ENCODE measurements at regions of chr1 and their contacts with region 1.

Region 1: DNA sequence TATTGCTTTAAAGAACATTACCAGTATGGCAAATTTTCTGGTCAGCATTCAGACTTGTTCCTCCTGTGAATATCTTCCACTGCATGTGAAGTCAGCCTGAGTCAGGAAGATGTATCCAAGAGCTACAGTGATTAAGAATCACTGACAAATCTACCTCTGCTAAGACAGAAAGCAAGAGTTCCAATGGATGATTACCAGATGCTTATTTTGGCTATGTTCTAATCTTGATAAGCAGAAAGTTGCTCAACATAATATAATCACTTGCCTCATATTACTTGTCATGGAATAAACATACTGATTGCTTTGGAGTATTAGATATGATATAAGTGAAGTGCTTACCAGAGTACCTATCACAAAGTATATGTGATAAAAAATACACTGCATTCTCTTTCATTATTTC is 738.1 kb downstream of the ADGRL2 start:
- DNase-seq: no peak
- H3K4me3 ChIP-seq: no peak overlapping the region
- H3K27ac ChIP-seq: no peak overlapping the region
- H3K4me1 ChIP-seq: no peaks in the 10 kb centered on the region
- H3K27me3 ChIP-seq: no peaks in the 10 kb centered on the region
- CTCF ChIP-seq: no peak
- EP300 ChIP-seq: no peak
- POLR2A ChIP-seq: no peak

Region 2: DNA sequence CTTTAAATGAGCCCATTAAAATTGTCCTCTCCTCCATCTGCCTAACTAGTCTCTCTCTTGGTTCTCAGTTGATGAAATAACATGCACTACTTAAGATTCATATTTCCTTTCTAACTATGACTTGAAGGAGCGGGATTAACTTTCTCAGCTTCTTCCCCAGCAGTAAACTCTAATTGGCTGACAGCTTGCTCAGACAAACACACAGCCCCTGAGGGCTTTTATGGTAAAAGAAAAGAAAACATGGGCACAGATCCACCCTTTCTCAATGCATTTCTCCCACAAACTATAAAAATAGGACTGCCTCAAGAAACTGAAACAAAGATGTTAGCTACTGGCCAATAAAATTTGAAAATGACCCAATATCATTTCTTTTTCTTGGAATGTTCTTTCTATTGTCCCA is 35.1 kb before region 1 on chr1:
- intact Hi-C with region 1: no loop called
- DNase-seq: no peak
- H3K4me3 ChIP-seq: no peak overlapping the region
- H3K27ac ChIP-seq: no peak overlapping the region
- H3K4me1 ChIP-seq: no peaks in the 10 kb centered on the region
- H3K27me3 ChIP-seq: no peaks in the 10 kb centered on the region
- CTCF ChIP-seq: no peak
- EP300 ChIP-seq: no peak
- POLR2A ChIP-seq: no peak

Region 3: GRCh38 chr1:82517586-82517985 is 21.3 kb before region 1 on chr1:
- intact Hi-C with region 1: loop called (anchors 1 kb)
- DNase-seq: no peak
- H3K4me3 ChIP-seq: no peak overlapping the region
- H3K27ac ChIP-seq: no peak overlapping the region
- H3K4me1 ChIP-seq: no peaks in the 10 kb centered on the region
- H3K27me3 ChIP-seq: no peaks in the 10 kb centered on the region
- CTCF ChIP-seq: no peak
- EP300 ChIP-seq: no peak
- POLR2A ChIP-seq: no peak

Measured in esophagus muscularis mucosa (tissue), 4 donors.